ENCODE measurements at regions of chr14 and their contacts with region 1.

Region 1: GRCh38 chr14:23057757-23058653 is 685 bp upstream of the CDH24 start:
- DNase-seq: peak; percentile 90
- ATAC-seq: peak; percentile 86

Region 2: DNA sequence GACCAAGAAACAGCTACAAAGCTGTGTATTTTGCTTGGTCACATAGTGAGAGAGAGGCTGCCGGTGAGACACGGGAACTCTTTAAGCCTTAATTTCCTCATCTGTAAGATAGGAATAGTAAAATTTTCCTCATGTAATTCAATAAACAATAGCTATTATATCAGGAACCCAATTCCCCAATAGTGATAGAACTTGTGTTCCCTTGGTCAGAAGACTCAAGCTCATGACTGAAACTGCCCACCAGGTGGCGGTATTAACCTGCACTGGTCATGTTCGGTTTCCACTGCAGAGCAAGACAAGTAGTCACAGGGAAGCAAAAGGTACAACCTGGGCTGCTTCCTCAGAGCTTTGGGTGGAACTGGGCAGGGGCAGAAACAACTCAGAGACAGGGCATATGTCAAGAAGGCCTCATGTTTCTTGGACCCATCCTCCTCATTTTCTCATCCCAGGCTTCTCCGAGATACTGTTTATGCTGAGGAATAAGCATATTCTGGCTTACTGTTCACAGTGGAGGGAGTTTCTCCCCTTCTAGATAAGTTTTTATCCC is 71.4 kb before region 1 on chr14:
- intact Hi-C with region 1: loop called (anchors 2 kb)
- DNase-seq: peak; percentile 88
- ATAC-seq: peak; percentile 45